Sigmoid colon (tissue), 7 donors: ENCODE measurements at regions of chr16 and their contacts with region 1.

Region 1: DNA sequence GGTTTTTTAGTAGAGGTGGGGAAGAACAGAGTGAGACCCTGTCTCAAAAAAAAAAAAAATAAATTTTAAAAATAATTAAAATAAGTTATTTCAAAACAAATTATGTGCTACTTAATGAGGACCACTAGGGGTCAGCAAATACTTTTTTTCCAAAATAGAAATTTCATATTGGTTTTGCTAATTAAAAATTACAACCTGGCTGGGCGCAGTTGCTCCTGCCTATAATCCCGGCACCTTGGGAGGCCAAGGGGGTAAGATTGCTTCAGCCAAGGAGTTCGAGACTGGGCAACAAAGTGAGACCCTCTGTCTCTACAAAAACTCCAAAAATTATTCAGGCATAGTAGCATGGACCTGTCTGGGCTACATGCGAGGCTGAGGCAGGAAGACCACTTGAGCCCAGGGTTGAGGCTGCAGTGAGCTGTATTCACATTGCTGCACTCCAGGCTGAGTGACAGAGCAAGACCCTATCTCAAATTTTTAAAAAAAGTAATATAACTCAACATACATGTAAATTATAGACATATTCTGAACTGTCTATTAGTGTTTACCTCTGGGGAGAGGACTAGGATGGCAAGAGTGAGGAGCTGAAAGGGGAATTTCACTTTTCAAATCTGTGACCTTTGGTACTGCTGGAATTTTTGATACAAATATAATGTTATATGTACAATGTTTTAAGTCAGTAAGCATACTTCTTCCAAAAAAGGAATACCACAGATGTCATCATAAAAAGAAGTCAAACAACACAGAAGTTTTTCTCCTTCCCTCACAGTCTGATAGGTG is 8.1 kb downstream of the MEIOB start:
- DNase-seq: no peak
- H3K4me3 ChIP-seq: no peak overlapping the region
- H3K27ac ChIP-seq: no peak overlapping the region
- H3K4me1 ChIP-seq: no peaks in the 10 kb centered on the region
- H3K27me3 ChIP-seq: peaks cover 6 to 43% (median 16%) of the 10 kb centered on the region in 3 donors
- CTCF ChIP-seq: peak in 3 of 4 experiments; percentile 21 to 65 (median 47)
- EP300 ChIP-seq: no peak
- POLR2A ChIP-seq: no peak

Region 2: GRCh38 chr16:1749152-1750117 is 114.4 kb before region 1 on chr16:
- intact Hi-C with region 1: no loop called
- DNase-seq: no peak
- H3K4me3 ChIP-seq: no peak overlapping the region
- H3K27ac ChIP-seq: no peak overlapping the region
- H3K4me1 ChIP-seq: no peaks in the 10 kb centered on the region
- H3K27me3 ChIP-seq: no peaks in the 10 kb centered on the region
- CTCF ChIP-seq: no peak
- EP300 ChIP-seq: no peak
- POLR2A ChIP-seq: no peak

Region 3: DNA sequence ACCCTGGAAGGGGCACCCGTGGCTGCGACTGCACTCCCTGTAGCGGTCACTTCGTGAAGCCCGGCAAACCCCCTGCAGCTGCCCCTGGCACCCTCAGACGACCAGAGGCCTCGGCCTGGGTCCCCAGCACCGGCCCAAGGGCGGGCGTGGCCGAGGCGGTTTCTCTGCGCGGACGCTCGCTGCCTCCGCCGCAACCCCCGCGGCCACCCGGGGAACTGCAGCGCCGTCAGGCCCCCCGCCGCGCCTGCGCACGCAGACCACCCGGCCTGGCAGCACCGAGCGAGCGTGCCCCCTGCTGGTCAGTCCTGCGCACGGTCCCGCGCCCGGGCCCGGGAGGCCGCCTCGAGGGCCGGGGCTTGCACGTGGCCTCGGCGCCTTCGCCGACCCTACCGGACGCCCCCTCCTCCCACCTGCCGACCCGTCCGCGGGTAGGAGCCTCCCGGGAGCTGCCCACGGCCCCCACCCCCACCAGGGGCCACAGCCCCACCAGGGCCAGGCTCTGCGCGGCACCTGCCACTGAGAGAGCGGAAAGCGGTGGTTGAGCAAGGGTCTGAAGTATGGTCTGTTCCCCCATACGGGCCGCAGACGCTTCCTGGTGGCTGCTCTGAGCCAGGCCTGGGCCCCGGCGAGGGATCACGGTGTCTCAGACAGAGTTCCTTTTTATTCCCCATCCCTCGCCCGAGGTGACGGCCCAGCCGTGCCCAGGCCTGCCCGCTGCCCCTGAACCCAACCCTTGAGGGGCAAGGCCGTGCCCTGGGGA is 65.9 kb after region 1 on chr16:
- intact Hi-C with region 1: loop called (anchors 1 kb)
- DNase-seq: peak; percentile 95
- H3K4me3 ChIP-seq: peak overlapping the region; percentile 34 to 82 (median 77)
- H3K27ac ChIP-seq: peak overlapping the region; percentile 80 to 96 (median 88)
- H3K4me1 ChIP-seq: peaks cover 0 to 12% (median 7%) of the 10 kb centered on the region in 4 donors
- H3K27me3 ChIP-seq: peaks cover 0 to 19% (median 5%) of the 10 kb centered on the region in 3 donors
- CTCF ChIP-seq: peak; percentile 27 to 100 (median 72)
- EP300 ChIP-seq: no peak
- POLR2A ChIP-seq: no peak

Region 4: DNA sequence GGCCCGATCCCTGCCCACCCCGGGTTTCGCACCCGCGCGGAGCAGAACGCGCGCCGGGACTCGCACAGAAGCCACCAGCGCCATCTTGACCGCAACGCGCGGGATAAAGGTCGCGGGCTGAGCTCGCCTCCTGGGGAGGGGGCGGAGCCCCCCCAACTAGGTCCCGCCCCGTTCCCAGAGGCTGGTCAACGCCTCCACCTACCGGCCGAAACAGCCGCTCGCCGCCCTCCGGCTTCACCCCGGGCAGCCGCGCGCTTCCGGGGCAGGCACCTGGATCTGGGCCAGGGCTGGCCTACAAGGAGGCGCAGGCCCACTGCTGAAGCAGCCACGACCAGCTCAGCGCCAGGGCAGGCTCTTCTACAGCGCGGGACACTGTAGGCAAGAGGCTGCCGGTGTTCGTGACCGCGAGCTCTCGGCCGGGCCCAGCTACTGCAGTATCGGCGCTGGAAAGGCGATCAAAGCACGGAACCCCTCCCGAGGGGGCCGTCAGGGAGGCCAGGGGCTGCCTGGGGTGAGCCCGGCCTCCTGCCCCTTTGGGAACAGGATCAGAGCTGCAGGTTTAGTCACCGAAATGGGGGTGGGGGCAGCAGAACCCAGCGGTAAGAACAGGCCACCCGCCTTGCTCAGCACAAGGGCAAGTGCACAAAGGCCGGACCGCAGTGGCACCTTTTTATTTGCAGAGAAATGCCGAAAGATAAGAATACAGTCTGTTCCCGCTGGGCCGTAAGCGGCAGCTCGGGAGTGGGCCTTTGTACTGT is 387.8 kb after region 1 on chr16 and contains the start of gene ECI1:
- intact Hi-C with region 1: no loop called
- DNase-seq: peak; percentile 98
- H3K4me3 ChIP-seq: peak within 1 kb of the TSS; percentile 63 to 75 (median 70)
- H3K27ac ChIP-seq: peak within 1 kb of the TSS; percentile 90 to 94 (median 92)
- H3K4me1 ChIP-seq: peaks cover 0 to 27% (median 23%) of the 10 kb centered on the region in 4 donors
- H3K27me3 ChIP-seq: no peaks in the 10 kb centered on the region
- CTCF ChIP-seq: peak; percentile 66 to 76 (median 70)
- EP300 ChIP-seq: no peak
- POLR2A ChIP-seq: peak; percentile 55 to 71
- total RNA-seq, gene ECI1: 50.2 to 87.2 (median 67.0) TPM